ENCODE measurements at regions of chr1 and their contacts with region 1.

Region 1: GRCh38 chr1:241639623-241640028 is 543 bp downstream of the CHML start:
- DNase-seq: peak; percentile 66 to 74 (median 68)
- ATAC-seq: peak; percentile 60
- H3K4me3 ChIP-seq: peak overlapping the region; percentile 88
- H3K27ac ChIP-seq: peak overlapping the region; percentile 93
- H3K4me1 ChIP-seq: peaks cover 7 to 9% of the 10 kb centered on the region in 2 experiments
- H3K27me3 ChIP-seq: no peaks in the 10 kb centered on the region
- CTCF ChIP-seq: 0 out of 6 replicates have a peak, but pooled peaks of 1 of the 3 experiments have one; percentile 23
- EP300 ChIP-seq: no peak
- POLR2A ChIP-seq: no peak; the same call in none of the 2 replicates
- RAD21 ChIP-seq: no peak

Region 2: GRCh38 chr1:241716915-241717656 is 77.5 kb after region 1 on chr1:
- CTCF ChIA-PET with region 1: no interaction called
- POLR2A ChIA-PET with region 1: no interaction called
- in situ Hi-C with region 1: no loop called
- intact Hi-C with region 1: loop called (anchors 5 kb)
- DNase-seq: no peak
- ATAC-seq: no peak
- H3K4me3 ChIP-seq: no peak overlapping the region
- H3K27ac ChIP-seq: no peak overlapping the region
- H3K4me1 ChIP-seq: peaks cover 0 to 8% of the 10 kb centered on the region in 2 experiments; a peak in 3 of 5 replicates
- H3K27me3 ChIP-seq: no peaks in the 10 kb centered on the region
- CTCF ChIP-seq: no peak
- EP300 ChIP-seq: no peak
- POLR2A ChIP-seq: no peak
- RAD21 ChIP-seq: no peak

Region 3: DNA sequence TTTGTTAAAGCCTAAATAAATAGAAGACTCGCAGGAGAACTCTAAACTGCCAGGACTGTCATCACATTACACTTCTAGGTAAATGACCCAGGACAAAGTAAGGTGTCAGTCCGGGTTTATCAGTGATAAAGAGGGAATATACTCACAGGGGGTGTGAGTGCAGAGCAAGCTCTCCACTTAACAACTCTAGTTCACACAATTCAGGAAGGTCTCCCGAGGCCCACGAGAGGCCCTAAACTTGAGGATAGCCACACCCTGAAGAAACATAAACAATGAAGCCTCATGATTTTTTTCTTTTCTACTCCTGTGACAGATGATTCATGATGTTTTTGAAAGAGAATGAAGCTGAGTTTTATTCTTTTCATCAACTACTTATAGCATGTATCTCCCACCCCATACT is 142.8 kb after region 1 on chr1:
- CTCF ChIA-PET with region 1: no interaction called
- POLR2A ChIA-PET with region 1: no interaction called
- in situ Hi-C with region 1: no loop called
- intact Hi-C with region 1: no loop called
- DNase-seq: peak in 2 of 4 experiments; percentile 24
- ATAC-seq: peak; percentile 75
- H3K4me3 ChIP-seq: no peak overlapping the region
- H3K27ac ChIP-seq: no peak overlapping the region
- H3K4me1 ChIP-seq: peaks cover 4% of the 10 kb centered on the region in 2 experiments; a peak in 3 of 5 replicates
- H3K27me3 ChIP-seq: no peaks in the 10 kb centered on the region
- CTCF ChIP-seq: no peak
- EP300 ChIP-seq: no peak
- POLR2A ChIP-seq: no peak
- RAD21 ChIP-seq: no peak

Measured in K562 (cell line).